A673 (cell line): ENCODE measurements at regions of chr15 and their contacts with region 1.

Region 1: GRCh38 chr15:66700802-66701421 is 1.1 kb upstream of the SMAD6 start:
- DNase-seq: peak; percentile 97
- H3K4me3 ChIP-seq: peak overlapping the region; percentile 63
- H3K27ac ChIP-seq: peak overlapping the region; percentile 82
- H3K4me1 ChIP-seq: peaks cover 26% of the 10 kb centered on the region
- H3K27me3 ChIP-seq: no peaks in the 10 kb centered on the region
- CTCF ChIP-seq: no peak

Region 2: DNA sequence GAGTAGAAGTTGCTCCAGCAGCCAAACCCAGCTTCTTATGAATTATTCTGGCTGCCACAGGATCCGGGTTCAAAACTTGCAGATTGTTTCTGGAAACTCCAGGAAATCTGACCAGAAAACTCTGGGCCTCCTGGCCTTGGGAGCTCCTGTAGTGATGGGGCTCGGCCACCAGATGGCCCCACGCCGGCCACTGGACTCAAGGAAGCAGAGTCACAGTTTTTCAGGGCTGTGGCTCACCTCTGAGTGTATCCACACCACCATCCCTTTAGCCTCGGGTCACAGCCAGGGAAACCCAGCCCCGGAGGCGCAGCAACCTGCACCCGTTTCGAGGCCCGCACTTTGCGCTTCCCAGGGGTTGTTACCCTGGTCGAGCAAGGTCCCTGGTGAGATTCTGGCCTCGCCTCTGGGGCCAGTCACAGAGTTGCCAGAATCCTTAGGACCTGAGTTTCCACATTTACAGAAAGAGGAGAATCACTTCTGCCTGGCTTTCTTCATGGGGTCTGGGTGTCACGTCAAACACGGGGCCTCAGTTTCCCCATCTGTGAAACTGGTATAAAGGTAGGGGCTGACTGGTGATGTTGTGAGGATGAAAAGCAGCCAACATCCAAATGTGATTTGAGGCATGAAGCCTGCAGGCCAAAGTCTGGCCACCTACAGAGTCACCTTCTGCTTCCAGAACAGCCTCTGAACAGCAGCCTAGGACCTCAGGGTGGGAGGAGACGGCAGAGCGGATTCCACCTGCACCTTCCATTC is 81.6 kb before region 1 on chr15:
- CTCF ChIA-PET with region 1: interaction called, 6 read pairs
- POLR2A ChIA-PET with region 1: no interaction called
- intact Hi-C with region 1: loop called (anchors 5 kb)
- DNase-seq: peak; percentile 69
- H3K4me3 ChIP-seq: no peak overlapping the region
- H3K27ac ChIP-seq: no peak overlapping the region
- H3K4me1 ChIP-seq: peaks cover 31% of the 10 kb centered on the region
- H3K27me3 ChIP-seq: no peaks in the 10 kb centered on the region
- CTCF ChIP-seq: peak; percentile 84

Region 3: DNA sequence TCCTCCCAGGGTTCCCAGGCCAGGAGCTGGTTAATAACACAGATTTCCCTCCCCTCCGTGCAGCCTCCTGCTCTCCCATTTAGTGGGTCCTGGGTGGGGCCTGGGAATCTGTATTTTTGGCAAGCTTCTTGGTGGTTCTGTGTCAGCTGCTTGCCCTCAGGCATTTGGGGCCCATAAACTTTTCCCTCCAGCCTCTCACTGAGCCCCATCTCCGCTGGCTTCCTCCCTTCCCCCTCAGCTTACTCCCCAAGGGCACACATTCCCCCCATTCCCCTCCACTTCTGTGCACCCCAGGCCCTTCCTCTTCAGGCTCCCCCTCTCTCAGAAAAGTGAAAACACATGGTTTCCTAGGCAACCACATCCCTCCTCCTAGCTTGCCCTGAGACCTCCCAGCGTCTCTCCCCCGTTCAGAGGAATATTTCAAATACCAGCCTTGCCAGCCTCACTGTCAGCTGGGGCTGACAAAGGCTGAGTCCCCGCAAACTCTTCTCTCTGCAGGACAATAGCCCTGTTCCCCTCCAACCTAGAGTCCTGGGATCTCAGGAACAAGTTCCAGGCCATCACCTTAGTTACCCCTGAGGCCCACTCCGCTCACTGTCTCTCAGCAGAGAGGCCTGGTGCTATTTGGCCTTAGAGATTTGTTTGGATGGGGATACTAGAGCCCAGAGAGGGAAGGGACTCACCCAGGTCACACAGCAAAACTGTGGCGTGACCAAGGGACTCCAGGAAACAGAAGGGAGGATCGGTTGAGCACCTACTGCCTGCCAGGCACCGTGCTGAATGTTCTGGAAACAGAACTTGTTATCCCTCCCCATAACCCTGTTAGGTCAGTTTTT is 43.5 kb before region 1 on chr15:
- CTCF ChIA-PET with region 1: no interaction called
- POLR2A ChIA-PET with region 1: no interaction called
- intact Hi-C with region 1: loop called (anchors 2 kb)
- DNase-seq: peak; percentile 82
- H3K4me3 ChIP-seq: no peak overlapping the region
- H3K27ac ChIP-seq: peak overlapping the region; percentile 70
- H3K4me1 ChIP-seq: peaks cover 29% of the 10 kb centered on the region
- H3K27me3 ChIP-seq: no peaks in the 10 kb centered on the region
- CTCF ChIP-seq: no peak

Region 4: DNA sequence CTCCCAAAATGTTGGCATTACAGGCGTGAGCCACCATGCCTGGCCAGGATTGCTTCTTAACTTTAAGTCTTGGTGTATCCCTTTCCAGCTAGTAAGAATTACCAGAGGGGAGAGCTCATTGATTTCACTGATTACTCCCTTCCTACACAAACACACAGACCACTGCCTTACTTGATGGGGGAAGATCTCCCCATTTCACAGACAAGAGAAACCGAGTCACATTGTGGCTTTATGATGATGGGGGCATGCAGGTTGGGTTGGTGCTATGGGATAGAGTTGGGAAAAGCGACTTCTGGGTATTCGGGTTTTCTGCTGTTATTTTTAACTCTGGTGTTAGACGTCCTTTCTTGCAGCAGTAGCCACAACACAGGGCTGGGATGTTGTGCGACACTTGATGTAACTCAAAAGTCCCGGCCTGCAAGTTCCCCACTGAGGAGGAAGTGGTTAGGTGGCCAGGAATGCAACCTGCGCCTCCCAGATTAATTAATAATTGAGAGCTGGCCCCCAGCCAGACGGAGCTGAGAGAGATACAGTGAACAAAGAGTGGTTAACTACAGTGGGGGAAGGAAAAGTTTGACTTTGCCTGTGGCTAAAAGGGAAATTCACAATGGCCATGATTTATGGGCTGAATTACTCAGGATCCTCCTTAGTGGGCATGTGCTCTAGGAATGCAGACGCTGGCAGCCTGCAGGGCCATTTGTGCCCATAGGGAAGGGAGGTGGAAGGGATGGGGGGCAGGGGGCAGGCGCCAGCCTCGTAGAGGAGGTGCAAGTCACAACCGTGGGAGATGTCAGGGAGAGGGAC is 64.8 kb after region 1 on chr15:
- CTCF ChIA-PET with region 1: no interaction called
- POLR2A ChIA-PET with region 1: no interaction called
- intact Hi-C with region 1: loop called (anchors 2 kb)
- DNase-seq: peak; percentile 97
- H3K4me3 ChIP-seq: no peak overlapping the region
- H3K27ac ChIP-seq: peak overlapping the region; percentile 67
- H3K4me1 ChIP-seq: peaks cover 77% of the 10 kb centered on the region
- H3K27me3 ChIP-seq: no peaks in the 10 kb centered on the region
- CTCF ChIP-seq: no peak